ENCODE measurements at regions of chr12 and their contacts with region 1.

Region 1: DNA sequence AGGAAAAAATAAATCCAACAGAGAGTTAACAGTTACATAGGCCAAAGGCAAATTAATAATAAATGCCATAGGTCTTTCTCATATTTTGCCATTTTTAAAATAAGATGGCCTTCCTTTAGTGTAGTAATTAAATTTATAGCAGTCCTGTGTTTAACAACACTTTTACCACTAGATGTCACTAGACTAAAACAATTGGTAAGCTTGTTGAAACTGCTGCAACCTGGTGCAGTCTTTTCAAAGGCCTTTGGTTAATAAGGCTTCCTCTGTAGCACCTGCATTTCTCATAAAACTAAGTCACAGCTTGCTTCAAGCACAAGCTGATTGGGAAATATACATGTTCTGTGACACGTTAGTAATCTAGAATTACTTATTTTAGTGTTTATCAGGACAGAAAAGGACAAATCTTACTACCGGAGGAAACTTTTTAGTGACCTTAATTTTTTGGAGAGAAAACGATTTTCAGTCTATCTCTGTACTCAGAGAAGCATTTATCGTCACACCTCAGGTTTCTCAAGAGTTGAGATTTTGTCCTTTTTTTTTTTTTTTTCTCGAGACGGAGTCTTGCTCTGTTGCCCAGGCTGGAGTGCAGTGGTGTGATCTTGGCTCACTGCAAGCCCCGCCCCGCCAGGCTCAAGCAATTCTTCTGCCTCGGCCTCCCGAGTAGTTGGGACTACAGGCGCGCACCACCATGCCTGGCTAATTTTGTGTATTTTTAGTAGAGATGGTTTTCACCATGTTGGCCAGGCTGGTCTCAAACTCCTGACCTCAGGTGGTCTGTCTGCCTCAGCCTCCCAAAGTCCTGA is 20.0 kb downstream of the BORCS5 start:
- DNase-seq: peak; percentile 66
- H3K4me3 ChIP-seq: no peak overlapping the region; a peak in 1 of 4 replicates
- H3K27ac ChIP-seq: no peak overlapping the region
- H3K4me1 ChIP-seq: peaks cover 0 to 7% of the 10 kb centered on the region in 2 experiments; a peak in 1 of 4 replicates
- H3K27me3 ChIP-seq: no peaks in the 10 kb centered on the region
- CTCF ChIP-seq: peak; percentile 84
- EP300 ChIP-seq: no peak
- RAD21 ChIP-seq: peak; percentile 100

Region 2: DNA sequence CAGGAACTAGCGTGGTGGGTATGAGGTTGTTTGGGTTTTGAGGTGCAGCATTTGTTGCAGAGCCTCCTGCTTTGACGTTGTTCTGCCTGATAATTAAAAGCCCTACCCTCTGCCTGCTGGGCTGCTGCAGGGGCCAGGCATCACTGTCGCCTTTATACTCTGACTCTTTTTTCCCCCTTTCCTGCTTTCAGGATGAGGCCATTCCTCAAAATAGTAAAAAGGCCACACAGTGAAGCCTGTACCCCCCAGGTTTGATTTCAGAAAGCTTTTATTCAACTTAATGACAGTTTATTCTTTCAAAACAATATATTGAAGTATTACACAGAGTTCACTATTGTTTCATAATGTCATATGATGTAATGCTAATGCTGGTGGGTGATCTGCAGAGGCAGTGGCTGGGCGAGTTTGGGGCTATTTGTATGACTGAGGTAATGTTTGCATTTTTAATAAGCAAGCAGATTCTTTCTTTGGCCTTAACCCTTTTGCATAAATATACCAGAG is 10.9 kb before region 1 on chr12:
- CTCF ChIA-PET with region 1: interaction called, 21 read pairs
- POLR2A ChIA-PET with region 1: no interaction called
- DNase-seq: peak; percentile 43
- H3K4me3 ChIP-seq: no peak overlapping the region
- H3K27ac ChIP-seq: peak overlapping the region in 1 of 2 experiments; percentile 59; a peak in 2 of 4 replicates
- H3K4me1 ChIP-seq: peaks cover 4 to 9% of the 10 kb centered on the region in 2 experiments; a peak in 1 of 4 replicates
- H3K27me3 ChIP-seq: no peaks in the 10 kb centered on the region
- CTCF ChIP-seq: no peak
- EP300 ChIP-seq: no peak
- RAD21 ChIP-seq: no peak

Region 3: DNA sequence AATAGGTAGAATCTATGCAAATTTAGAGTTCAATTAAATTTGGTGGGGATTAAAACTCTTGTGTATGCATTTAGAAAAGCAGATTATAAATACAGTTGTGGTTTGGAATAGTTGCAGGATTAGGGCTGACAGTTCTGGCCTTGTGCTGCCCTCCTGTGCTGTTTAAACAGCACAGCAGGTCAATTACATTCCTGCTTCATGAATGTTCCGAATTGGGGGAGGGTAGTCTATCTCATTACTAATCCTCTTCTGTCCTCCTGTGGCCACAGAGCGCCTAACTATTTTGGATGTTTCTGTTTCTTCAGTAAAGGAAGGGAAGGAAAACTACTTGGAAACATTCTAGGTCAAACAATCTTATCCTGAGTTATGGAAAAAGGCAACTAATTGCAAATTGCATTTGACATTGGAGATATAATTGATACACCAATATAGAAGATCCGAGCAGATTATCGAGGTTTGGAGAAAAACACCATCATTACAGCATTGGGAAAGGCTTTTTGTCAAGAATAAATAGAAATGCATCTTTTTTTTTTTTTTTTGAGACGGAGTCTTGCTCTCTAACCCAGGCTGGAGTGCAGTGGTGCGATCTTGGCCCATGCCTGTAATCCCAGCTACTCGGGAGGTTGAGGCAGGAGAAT is 327.9 kb after region 1 on chr12:
- CTCF ChIA-PET with region 1: interaction called, 35 read pairs
- POLR2A ChIA-PET with region 1: no interaction called
- DNase-seq: peak; percentile 78
- H3K4me3 ChIP-seq: peak overlapping the region in 1 of 2 experiments; percentile 28; a peak in 1 of 4 replicates
- H3K27ac ChIP-seq: no peak overlapping the region
- H3K4me1 ChIP-seq: no peaks in the 10 kb centered on the region
- H3K27me3 ChIP-seq: no peaks in the 10 kb centered on the region
- CTCF ChIP-seq: peak; percentile 100
- EP300 ChIP-seq: peak in 1 of 2 experiments; percentile 62; a peak in 2 of 4 replicates
- RAD21 ChIP-seq: peak; percentile 100